Heart right ventricle (tissue), 16 donors: ENCODE measurements at regions of chr9 and their contacts with region 1.

Region 1: GRCh38 chr9:136493567-136493971 is 10.7 kb upstream of the SEC16A start:
- DNase-seq: peak in 1 of 2 donors; percentile 11
- ATAC-seq: peak; percentile 2 to 20 (median 8)
- H3K4me3 ChIP-seq: no peak overlapping the region
- H3K27ac ChIP-seq: peak overlapping the region in 4 of 10 donors; percentile 20 to 45 (median 41)
- H3K4me1 ChIP-seq: peaks cover 0 to 32% (median 14%) of the 10 kb centered on the region in 9 donors
- H3K27me3 ChIP-seq: no peaks in the 10 kb centered on the region
- CTCF ChIP-seq: no peak

Region 2: DNA sequence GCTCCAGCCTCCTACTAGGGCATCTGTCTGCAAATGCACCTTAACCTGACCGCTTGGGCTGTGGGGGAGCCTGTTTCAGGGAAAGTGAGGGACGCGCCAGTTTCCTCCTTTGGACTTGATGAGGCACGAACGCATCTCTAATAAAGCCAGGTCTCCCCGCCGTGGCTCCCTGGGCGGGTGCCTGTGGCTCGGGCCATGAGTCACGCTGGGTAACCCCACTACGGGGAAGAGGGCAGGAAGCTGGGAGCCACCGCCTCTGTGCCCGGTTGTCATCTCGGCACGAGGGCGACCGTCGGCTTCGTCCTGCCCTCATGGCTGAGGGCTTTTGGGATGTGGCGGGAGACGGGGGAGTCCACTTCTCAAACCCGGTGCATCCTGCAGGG is 40.2 kb after region 1 on chr9:
- intact Hi-C with region 1: loop called in 2 of 10 experiments (anchors 5 kb)
- DNase-seq: no peak
- ATAC-seq: peak in 2 of 8 donors; percentile 33 to 34
- H3K4me3 ChIP-seq: peak overlapping the region in 4 of 10 donors; percentile 5 to 40 (median 20)
- H3K27ac ChIP-seq: peak overlapping the region in 9 of 10 donors; percentile 31 to 88 (median 77)
- H3K4me1 ChIP-seq: peaks cover 63 to 94% (median 91%) of the 10 kb centered on the region in 9 donors
- H3K27me3 ChIP-seq: peaks cover 0 to 5% (median 0%) of the 10 kb centered on the region in 7 donors
- CTCF ChIP-seq: no peak